ENCODE measurements at regions of chr1 and their contacts with region 1.

Region 1: DNA sequence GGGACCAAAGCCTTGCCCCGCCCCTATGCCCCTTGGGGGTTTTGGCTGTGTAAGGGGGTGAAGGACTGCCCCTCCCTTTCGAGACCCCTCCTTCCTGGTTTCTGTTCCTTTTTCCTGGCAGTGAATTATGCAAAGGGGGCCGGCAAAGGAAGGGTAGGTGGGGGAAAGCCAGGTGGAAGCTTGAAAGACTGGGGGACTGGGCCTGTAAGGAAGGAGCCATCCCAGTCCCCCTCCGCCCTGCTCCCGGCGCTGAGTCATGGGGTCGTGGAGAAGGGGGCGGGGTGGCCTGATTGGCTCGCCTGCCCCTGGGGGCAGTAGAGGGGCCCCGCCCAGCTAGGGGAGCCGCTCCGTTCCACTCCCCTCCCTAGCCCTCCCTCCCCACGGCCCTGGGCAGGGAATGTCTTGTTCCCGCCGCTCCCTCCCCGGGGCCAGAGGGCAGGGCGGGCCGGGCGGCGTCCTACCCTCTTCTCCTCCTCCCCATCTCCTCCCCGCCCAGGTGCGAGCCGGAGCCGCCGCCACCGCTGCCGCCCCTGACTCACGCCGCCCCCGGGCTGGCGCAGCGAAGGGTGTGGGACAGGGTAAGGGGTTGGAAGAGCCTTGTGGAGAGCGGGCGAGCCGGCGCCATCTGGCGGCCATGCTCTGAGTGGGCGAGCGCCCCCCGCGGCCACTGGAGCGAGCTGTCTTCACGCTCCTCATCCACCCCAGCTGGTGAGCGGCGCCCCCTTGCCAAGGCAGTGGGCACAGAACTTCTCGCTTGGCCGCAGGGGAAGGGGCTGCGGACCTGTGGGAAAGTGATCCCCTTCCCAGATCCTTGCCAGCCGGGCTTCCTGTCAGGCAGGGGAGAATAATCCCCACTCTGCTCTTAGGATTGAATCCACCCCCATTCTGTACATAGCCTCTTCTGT is 14.7 kb downstream of the ZBTB7B start:
- DNase-seq: peak; percentile 85 to 95 (median 92)
- ATAC-seq: peak; percentile 81 to 93 (median 90)
- H3K4me3 ChIP-seq: peak overlapping the region in 3 of 4 donors; percentile 4 to 40 (median 23)
- H3K27ac ChIP-seq: peak overlapping the region; percentile 22 to 72 (median 48)
- H3K4me1 ChIP-seq: peaks cover 0 to 14% (median 5%) of the 10 kb centered on the region in 3 donors
- H3K27me3 ChIP-seq: no peaks in the 10 kb centered on the region
- CTCF ChIP-seq: peak; percentile 89 to 98 (median 96)

Region 2: DNA sequence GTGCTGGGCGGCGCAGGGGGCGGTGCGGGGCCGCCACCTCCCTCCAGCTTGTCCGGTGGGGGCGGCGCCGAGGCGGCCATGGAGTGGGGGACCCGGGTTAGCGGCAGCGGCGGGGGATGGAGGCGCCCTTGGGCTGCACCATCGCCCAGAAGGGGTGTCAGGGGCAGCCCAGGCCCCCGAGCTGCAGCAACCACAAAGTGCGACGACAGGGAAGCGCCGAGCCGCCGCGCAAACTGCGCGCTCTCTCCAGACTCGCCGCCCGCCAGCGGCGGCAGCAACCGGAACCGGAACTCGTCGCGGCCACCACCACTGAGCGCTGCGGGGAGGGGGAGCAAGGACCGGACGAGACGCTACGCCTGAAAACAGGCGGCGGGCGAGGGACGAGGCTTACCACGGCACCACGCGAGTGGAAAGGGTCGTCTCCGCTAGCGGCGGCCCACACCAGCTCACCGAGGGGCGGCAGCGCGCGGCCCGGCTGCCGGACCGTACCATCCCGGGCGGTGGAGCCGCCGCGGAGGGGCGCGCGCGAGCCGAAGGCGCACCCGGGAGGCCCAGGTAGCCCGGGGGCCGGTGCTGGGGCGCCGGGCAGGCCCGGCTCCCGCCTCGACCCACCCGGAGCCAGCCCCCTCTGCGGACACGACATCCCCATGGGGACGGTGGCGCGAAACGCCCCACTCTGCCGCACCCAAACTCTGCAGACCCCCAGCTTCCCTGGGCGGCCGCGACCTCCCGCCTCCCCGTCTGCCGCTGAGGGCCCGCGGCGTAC is 55.6 kb before region 1 on chr1 and contains the start of gene PYGO2:
- intact Hi-C with region 1: loop called in 2 of 3 experiments (anchors 10 kb)
- DNase-seq: peak; percentile 75 to 92 (median 81)
- ATAC-seq: peak; percentile 83 to 88 (median 86)
- H3K4me3 ChIP-seq: peak within 1 kb of the TSS; percentile 79 to 96 (median 92)
- H3K27ac ChIP-seq: peak within 1 kb of the TSS; percentile 89 to 98 (median 96)
- H3K4me1 ChIP-seq: peaks cover 0 to 13% (median 8%) of the 10 kb centered on the region in 3 donors
- H3K27me3 ChIP-seq: no peaks in the 10 kb centered on the region
- CTCF ChIP-seq: peak in 1 of 4 donors; percentile 28
- total RNA-seq, gene PYGO2: 8.1 to 18.3 (median 9.9) TPM

Region 3: DNA sequence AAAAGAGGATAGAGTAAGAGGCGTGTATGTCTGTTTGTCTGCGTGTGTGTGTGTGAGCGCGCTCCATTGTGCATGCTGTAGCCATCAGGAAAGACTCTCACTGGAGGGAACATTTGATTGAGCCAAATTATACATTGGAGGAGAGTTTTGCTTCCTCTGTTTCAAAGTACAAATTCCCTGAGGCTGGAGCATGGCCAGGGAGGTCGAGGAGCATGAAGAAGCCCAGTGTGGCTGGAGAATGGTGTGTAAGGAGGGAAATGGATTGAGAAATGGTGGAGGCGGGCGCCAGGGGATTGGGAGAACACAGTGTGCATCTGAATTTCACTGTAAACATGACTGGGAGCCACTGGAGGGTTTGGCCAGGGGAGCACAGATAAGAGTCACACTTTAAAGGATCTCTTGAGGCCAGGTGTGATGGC is 88.3 kb after region 1 on chr1:
- intact Hi-C with region 1: no loop called
- DNase-seq: no peak
- ATAC-seq: peak in 2 of 4 donors; percentile 18 to 31
- H3K4me3 ChIP-seq: no peak overlapping the region
- H3K27ac ChIP-seq: no peak overlapping the region
- H3K4me1 ChIP-seq: peaks cover 0 to 5% (median 0%) of the 10 kb centered on the region in 3 donors
- H3K27me3 ChIP-seq: no peaks in the 10 kb centered on the region
- CTCF ChIP-seq: no peak